MCF 10A (cell line): ENCODE measurements at regions of chr3 and their contacts with region 1.

Region 1: GRCh38 chr3:57597122-57597923 is at the start of gene ARF4:
- DNase-seq: peak; percentile 100
- H3K4me3 Mint-ChIP-seq: peak within 1 kb of the TSS; percentile 86
- H3K27ac Mint-ChIP-seq: peak within 1 kb of the TSS; percentile 100
- H3K4me1 Mint-ChIP-seq: peaks cover 31% of the 10 kb centered on the region
- H3K27me3 Mint-ChIP-seq: no peaks in the 10 kb centered on the region
- CTCF ChIP-seq: no peak
- total RNA-seq, gene ARF4: 275 and 396 TPM in 2 replicates

Region 2: GRCh38 chr3:57227204-57227929 is 370.0 kb before region 1 on chr3 and contains the start of gene APPL1:
- CTCF ChIA-PET with region 1: no interaction called
- POLR2A ChIA-PET with region 1: interaction called, 20 read pairs
- intact Hi-C with region 1: no loop called
- DNase-seq: peak; percentile 90
- H3K4me3 Mint-ChIP-seq: peak within 1 kb of the TSS; percentile 84
- H3K27ac Mint-ChIP-seq: peak within 1 kb of the TSS; percentile 75
- H3K4me1 Mint-ChIP-seq: peaks cover 11% of the 10 kb centered on the region
- H3K27me3 Mint-ChIP-seq: no peaks in the 10 kb centered on the region
- CTCF ChIP-seq: peak; percentile 5
- total RNA-seq, gene APPL1: 26.4 and 35.4 TPM in 2 replicates

Region 3: DNA sequence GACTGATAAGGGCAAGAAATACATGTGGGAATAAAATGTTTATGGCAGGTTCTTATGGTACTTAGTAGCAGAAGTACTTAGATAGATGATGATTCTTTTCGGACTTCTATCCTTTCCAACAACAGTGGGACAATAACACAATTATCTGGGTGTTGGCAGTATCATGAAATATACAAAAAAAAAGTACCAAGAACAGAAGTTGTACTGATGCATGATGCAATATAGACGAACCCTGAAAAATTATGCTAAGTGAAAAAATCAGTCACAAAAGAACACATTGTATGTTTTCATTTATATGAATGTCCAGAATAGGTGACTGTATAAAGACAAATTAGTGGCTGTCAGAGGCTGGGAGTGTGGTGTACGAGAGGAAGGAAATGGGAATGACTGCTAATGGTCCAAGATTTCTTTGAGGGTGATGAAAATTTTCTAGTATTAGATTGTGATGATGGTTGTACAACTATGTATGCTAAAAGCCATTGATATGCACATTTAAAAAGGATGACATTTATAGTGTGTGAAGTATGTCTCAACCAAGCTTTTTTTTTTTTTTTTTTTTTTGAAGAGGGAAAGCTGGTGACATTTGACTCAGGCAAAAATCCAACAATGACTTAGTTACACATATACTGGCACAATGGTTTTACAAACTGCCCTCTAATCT is 21.2 kb before region 1 on chr3:
- CTCF ChIA-PET with region 1: no interaction called
- POLR2A ChIA-PET with region 1: interaction called, 44 read pairs
- intact Hi-C with region 1: no loop called
- DNase-seq: no peak
- H3K4me3 Mint-ChIP-seq: no peak overlapping the region
- H3K27ac Mint-ChIP-seq: peak overlapping the region; percentile 37
- H3K4me1 Mint-ChIP-seq: peaks cover 6% of the 10 kb centered on the region
- H3K27me3 Mint-ChIP-seq: no peaks in the 10 kb centered on the region
- CTCF ChIP-seq: no peak

Region 4: GRCh38 chr3:57692259-57693147 is 95.2 kb after region 1 on chr3 and contains the start of gene DENND6A:
- CTCF ChIA-PET with region 1: interaction called, 3 read pairs
- POLR2A ChIA-PET with region 1: interaction called, 11 read pairs
- intact Hi-C with region 1: no loop called
- DNase-seq: peak; percentile 91
- H3K4me3 Mint-ChIP-seq: peak within 1 kb of the TSS; percentile 80
- H3K27ac Mint-ChIP-seq: peak within 1 kb of the TSS; percentile 71
- H3K4me1 Mint-ChIP-seq: peaks cover 25% of the 10 kb centered on the region
- H3K27me3 Mint-ChIP-seq: no peaks in the 10 kb centered on the region
- CTCF ChIP-seq: no peak
- total RNA-seq, gene DENND6A: 21.2 and 22.3 TPM in 2 replicates

Region 5: DNA sequence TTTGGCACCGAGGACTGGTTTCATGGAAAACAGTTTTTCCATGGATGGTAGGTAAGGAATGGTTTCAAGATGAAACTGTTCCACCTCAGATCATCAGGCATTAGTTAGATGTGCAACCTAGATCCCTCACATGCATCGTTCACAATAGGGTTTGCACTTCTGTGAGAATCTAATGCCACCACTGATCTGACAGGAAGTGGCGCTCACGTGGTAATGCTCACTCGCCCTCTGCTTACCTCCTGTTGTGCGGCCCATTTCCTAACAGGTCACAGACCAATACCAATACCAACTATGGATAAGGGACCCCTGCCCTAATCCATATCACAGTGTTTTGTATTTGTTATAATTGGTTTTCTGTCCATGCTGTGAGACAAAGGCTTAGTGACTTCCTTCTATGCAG is 217.7 kb after region 1 on chr3:
- CTCF ChIA-PET with region 1: no interaction called
- POLR2A ChIA-PET with region 1: interaction called, 11 read pairs
- intact Hi-C with region 1: no loop called
- DNase-seq: no peak
- H3K4me3 Mint-ChIP-seq: no peak overlapping the region
- H3K27ac Mint-ChIP-seq: no peak overlapping the region
- H3K4me1 Mint-ChIP-seq: peaks cover 15% of the 10 kb centered on the region
- H3K27me3 Mint-ChIP-seq: no peaks in the 10 kb centered on the region
- CTCF ChIP-seq: no peak